Calu3 (cell line): ENCODE measurements at regions of chr10 and their contacts with region 1.

Region 1: DNA sequence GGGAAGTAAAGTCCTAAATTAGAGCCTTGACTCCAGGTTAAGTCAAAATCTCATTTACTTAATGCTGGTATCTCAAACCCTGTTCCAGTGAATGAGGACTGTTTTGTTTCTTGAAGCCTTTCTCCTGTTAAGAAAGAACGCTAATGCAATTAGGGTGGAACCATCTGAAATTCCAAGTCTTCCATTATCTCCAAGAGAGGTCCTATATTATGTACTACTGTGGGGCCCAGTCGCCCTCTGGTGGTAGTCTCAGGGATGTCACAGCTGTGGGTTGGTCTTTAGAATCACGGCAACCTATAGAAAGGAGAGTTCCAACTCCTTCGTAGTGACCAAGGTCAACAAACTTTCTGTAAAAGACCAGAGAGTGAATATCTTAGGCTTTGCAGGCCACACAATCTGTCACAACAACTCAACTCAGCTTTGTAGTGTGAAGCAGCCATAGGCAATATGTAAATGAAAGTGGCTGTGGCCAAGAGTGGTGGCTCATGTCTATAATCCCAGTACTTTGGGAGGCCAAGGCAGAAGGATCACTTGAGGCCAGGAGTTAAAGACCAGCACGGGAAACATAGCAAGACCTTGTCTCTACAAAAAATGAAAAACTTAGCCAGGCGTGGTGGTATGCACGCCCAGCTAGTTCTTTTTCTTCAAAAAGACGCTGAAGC is 9.3 kb downstream of the RPP38 start:
- DNase-seq: peak; percentile 79
- H3K4me3 Mint-ChIP-seq: no peak overlapping the region
- H3K27ac Mint-ChIP-seq: no peak overlapping the region
- H3K4me1 Mint-ChIP-seq: peaks cover 6% of the 10 kb centered on the region
- H3K27me3 Mint-ChIP-seq: no peaks in the 10 kb centered on the region
- CTCF ChIP-seq: peak; percentile 84

Region 2: GRCh38 chr10:14653271-14654228 is 452.9 kb before region 1 on chr10:
- CTCF ChIA-PET with region 1: no interaction called
- intact Hi-C with region 1: no loop called
- DNase-seq: peak; percentile 74
- H3K4me3 Mint-ChIP-seq: peak overlapping the region; percentile 43
- H3K27ac Mint-ChIP-seq: peak overlapping the region; percentile 94
- H3K4me1 Mint-ChIP-seq: peaks cover 61% of the 10 kb centered on the region
- H3K27me3 Mint-ChIP-seq: no peaks in the 10 kb centered on the region
- CTCF ChIP-seq: no peak

Region 3: DNA sequence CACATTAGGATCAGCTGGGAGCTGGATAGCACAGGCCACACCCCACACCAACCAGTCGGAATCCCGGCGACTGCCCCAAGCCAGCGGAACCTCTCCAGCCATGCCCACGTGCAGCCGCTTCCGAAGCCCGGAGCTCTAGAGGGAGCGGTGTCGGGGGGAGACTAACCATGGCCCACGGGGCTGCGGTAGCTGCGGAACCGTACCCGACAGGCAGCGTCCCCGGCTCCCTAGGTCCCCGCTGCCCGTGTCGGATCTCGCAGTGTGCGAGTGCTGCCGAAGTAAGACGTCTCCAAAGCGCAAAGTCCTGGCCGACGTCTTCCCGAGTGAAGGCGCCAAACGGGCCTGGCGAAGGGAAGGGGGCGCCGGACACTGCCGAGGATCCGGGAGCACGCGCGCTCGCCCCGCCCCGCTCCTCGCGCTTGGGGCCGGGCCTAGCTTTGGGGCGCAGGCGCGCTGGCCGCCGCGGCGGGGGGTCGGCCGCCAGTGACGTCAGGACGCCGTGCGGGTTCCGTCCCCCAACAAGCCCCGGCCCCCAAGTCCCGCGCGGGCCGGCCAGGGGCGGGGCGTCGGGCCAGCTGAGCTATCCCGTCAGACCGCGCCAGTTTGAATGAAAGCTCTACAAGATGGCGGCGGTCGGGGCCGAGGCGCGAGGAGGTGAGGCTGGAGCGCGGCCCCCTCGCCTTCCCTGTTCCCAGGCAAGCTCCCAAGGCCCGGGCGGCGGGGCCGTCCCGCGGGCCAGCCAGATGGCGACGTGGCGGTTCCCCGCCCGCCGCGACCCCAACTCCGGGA is 228.0 kb before region 1 on chr10 and contains the start of gene SUV39H2:
- CTCF ChIA-PET with region 1: no interaction called
- intact Hi-C with region 1: no loop called
- DNase-seq: peak; percentile 97
- H3K4me3 Mint-ChIP-seq: peak within 1 kb of the TSS; percentile 94
- H3K27ac Mint-ChIP-seq: peak within 1 kb of the TSS; percentile 87
- H3K4me1 Mint-ChIP-seq: peaks cover 25% of the 10 kb centered on the region
- H3K27me3 Mint-ChIP-seq: no peaks in the 10 kb centered on the region
- CTCF ChIP-seq: no peak
- total RNA-seq, gene SUV39H2: 32.0 and 33.7 TPM in 2 replicates

Region 4: DNA sequence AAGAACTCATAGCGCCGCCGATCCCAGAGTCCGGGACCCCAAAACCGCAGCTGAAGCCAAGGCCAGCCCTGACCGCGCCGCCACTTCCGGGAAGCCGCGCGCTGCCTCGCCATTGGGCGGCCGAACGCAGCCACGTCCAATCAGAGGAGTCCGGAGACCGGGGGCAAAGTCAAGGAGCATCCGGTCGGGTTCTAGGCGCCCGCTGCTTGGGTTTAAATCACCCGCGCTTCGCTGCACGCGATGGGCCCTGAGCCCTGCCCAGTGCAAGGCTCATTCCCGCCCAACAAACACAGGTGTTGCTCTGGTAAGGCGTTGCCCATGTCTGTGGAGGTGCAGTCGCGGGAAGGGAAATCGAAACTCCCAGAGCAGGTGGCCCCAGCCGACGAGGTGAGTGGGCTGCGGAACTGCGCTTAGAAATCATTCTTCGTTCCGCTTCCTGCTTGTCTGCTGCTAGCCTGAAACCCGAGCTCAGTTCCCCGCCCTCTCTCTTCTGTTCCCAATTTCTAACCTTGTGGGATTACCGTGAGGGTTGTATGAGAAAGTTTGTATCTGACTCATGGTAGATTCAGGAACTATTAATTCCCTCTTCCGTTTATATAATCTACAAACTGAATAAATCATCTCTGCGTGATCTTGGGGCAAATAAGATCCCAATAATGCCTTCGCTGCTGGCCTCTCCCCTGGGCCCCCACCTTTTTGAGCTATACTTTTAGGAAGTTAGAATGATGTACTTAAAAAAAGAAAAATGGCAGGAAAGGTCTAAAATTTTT is 152.3 kb before region 1 on chr10 and contains the start of gene DCLRE1C:
- CTCF ChIA-PET with region 1: interaction called, 6 read pairs
- intact Hi-C with region 1: loop called (anchors 5 kb)
- DNase-seq: peak; percentile 94
- H3K4me3 Mint-ChIP-seq: peak within 1 kb of the TSS; percentile 91
- H3K27ac Mint-ChIP-seq: peak within 1 kb of the TSS; percentile 94
- H3K4me1 Mint-ChIP-seq: peaks cover 12% of the 10 kb centered on the region
- H3K27me3 Mint-ChIP-seq: no peaks in the 10 kb centered on the region
- CTCF ChIP-seq: no peak
- total RNA-seq, gene DCLRE1C: 21.2 and 26.3 TPM in 2 replicates

Region 5: DNA sequence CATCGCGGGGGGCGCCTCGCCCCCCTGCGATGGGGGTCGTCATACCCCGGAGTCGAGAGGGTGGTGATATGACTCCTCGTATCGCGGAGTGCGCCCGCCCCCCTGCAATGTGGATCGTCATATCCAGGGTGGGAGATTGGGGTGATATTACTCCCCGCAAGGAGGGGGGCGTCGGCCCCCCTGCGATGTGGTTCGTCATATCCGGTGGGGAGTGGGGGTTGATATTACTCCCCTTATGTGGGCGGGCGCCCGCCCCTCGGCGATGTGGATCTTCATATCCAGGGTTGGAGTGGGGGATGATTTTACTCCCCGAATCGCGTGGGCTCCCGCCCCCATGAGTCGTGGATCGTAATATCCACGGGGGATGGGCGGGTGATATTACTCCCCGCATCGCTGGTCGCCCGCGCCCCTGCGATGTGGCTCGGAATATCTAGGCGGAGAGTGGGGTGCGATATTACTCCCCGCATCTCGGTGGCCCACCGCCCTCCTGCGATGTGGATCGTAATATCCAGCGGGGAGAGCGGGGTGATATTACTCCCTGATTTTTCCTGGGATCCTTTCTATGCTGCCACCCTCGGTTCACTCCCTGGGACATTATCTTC is 110.4 kb before region 1 on chr10:
- CTCF ChIA-PET with region 1: no interaction called
- intact Hi-C with region 1: loop called (anchors 2 kb)
- DNase-seq: no peak
- H3K4me3 Mint-ChIP-seq: no peak overlapping the region
- H3K27ac Mint-ChIP-seq: no peak overlapping the region
- H3K4me1 Mint-ChIP-seq: peaks cover 6% of the 10 kb centered on the region
- H3K27me3 Mint-ChIP-seq: peaks cover 14% of the 10 kb centered on the region
- CTCF ChIP-seq: no peak